PC-9 (cell line): ENCODE measurements at regions of chr3 and their contacts with region 1.

Region 1: DNA sequence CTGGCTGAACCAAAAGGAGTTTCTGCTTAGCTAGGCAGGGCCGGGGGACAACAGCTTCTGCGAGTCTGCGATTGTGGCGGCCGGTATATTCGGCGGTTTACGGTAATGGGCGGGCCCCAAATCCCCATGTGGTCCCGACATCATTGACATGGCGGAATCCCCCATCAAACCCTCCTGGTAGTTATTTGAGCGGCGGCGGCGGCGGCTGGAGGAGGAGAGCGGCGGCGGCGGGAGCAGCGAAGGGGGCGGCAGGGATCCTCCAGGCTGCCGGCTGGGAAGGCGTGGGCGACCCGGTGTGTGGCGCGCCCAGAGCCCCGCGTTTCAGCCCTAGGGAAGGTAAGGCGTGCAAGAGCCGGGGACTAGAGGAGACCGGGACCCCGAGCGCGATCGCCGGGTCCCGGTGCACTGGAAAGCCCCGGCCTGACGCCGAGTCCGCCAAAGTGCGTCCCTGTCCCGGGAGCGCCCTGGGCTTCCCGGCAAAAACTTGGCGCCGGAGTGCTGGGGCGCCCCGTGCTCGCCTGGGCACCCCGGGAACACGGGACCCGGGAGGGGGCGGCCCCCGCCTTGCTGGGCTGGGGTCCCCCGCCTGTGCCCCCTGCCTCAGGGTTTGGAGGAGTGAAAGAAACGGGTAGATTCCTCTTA is at the start of gene FNDC3B:
- DNase-seq: peak; percentile 91 to 96
- H3K4me3 ChIP-seq: peak within 1 kb of the TSS; percentile 63
- H3K27ac ChIP-seq: peak within 1 kb of the TSS; percentile 96
- H3K4me1 ChIP-seq: peaks cover 58% of the 10 kb centered on the region
- H3K27me3 ChIP-seq: no peaks in the 10 kb centered on the region
- CTCF ChIP-seq: no peak
- total RNA-seq, gene FNDC3B: 79.4 and 106 TPM in 2 replicates

Region 2: GRCh38 chr3:171646357-171647133 is 393.0 kb before region 1 on chr3:
- CTCF ChIA-PET with region 1: no interaction called
- POLR2A ChIA-PET with region 1: no interaction called
- intact Hi-C with region 1: loop called (anchors 5 kb)
- DNase-seq: peak in 1 of 2 experiments; percentile 51
- H3K4me3 ChIP-seq: no peak overlapping the region
- H3K27ac ChIP-seq: no peak overlapping the region
- H3K4me1 ChIP-seq: no peaks in the 10 kb centered on the region
- H3K27me3 ChIP-seq: no peaks in the 10 kb centered on the region
- CTCF ChIP-seq: peak; percentile 90

Region 3: GRCh38 chr3:171829841-171830517 is 209.6 kb before region 1 on chr3:
- CTCF ChIA-PET with region 1: interaction called, 21 read pairs
- POLR2A ChIA-PET with region 1: no interaction called
- intact Hi-C with region 1: no loop called
- DNase-seq: peak; percentile 54 to 77
- H3K4me3 ChIP-seq: no peak overlapping the region
- H3K27ac ChIP-seq: no peak overlapping the region
- H3K4me1 ChIP-seq: peaks cover 26% of the 10 kb centered on the region
- H3K27me3 ChIP-seq: no peaks in the 10 kb centered on the region
- CTCF ChIP-seq: peak; percentile 77

Region 4: DNA sequence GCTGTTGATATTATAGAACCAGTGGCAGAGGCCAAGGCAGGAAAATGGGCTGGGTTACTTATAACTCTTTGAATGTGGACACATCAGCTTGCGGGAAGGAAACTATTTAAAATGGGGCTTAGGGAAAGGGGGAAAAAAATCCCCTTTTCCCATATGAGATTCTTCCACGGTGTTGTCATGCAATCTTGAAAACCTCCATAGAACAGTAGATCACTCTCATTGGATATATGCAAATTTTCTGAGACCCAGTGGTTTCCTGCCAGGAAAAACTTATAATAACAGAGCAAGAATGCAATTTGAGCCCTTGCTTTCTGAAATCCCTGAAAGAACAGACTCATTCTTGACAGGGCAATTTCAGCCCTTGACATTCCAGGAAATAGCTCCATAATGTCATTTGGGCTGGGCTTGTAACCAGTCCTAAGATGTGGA is 165.3 kb before region 1 on chr3:
- CTCF ChIA-PET with region 1: interaction called, 3 read pairs
- POLR2A ChIA-PET with region 1: interaction called, 24 read pairs
- intact Hi-C with region 1: loop called (anchors 1 kb)
- DNase-seq: peak; percentile 44 to 49
- H3K4me3 ChIP-seq: no peak overlapping the region
- H3K27ac ChIP-seq: 0 out of 2 replicates have a peak overlapping the region, but pooled peaks have one; percentile 0
- H3K4me1 ChIP-seq: peaks cover 15% of the 10 kb centered on the region; the same call in 1 of the 2 replicates
- H3K27me3 ChIP-seq: no peaks in the 10 kb centered on the region
- CTCF ChIP-seq: no peak

Region 5: DNA sequence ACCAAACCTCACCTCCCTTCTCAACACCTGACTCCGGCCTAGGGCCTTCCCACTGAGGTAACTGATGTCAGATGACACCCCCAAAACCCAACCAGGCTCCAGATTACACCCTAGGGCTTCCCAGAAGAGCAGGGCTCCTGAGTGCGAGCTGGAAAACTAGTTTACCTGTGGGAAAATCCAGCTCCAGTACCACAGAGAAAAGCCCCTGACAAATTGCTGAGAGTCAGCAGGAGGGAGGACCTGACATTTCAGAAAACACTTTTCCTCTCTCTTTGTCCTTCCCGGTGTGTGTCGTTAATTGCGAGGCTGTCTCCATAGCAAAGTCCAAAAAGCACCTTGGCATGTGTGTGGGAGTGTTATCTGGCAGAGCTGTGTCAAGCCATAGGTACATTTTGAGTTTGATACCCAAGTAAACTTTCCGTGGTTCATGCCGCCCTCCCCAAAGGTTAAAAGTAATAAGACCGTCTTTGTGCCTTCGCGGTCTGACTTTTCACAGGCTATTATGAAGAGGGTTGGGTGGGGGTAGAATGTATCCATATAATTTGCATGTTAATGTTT is 79.9 kb before region 1 on chr3:
- CTCF ChIA-PET with region 1: no interaction called
- POLR2A ChIA-PET with region 1: no interaction called
- intact Hi-C with region 1: loop called (anchors 2 kb)
- DNase-seq: no peak
- H3K4me3 ChIP-seq: 0 out of 2 replicates have a peak overlapping the region, but pooled peaks have one; percentile 14
- H3K27ac ChIP-seq: peak overlapping the region; percentile 91
- H3K4me1 ChIP-seq: peaks cover 36% of the 10 kb centered on the region
- H3K27me3 ChIP-seq: no peaks in the 10 kb centered on the region
- CTCF ChIP-seq: no peak

Region 6: DNA sequence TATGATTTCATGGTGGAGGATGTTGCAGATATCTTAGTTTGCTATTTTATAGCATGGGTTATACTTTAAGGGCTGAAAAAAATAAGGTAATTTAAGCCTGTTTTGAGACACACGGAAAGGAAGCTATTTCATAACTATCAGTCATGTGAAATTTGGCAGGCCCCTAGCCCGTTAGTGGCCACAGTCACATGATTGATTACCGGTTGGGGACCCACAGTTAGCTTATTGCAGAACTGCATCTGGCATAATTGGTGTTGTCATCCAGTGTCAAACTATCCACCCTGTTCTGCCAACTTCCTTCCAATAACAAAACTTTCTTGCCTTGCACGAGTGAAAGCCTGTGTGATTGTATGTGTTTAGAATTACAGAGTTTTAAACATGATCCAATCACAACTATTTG is 35.0 kb after region 1 on chr3:
- CTCF ChIA-PET with region 1: no interaction called
- POLR2A ChIA-PET with region 1: no interaction called
- intact Hi-C with region 1: no loop called
- DNase-seq: no peak
- H3K4me3 ChIP-seq: no peak overlapping the region
- H3K27ac ChIP-seq: no peak overlapping the region
- H3K4me1 ChIP-seq: 0 out of 2 replicates have a peak, but pooled peaks cover 9% of the 10 kb centered on the region
- H3K27me3 ChIP-seq: no peaks in the 10 kb centered on the region
- CTCF ChIP-seq: no peak

Region 7: GRCh38 chr3:172115787-172116186 is 76.2 kb after region 1 on chr3:
- CTCF ChIA-PET with region 1: no interaction called
- POLR2A ChIA-PET with region 1: no interaction called
- intact Hi-C with region 1: no loop called
- DNase-seq: no peak
- H3K4me3 ChIP-seq: no peak overlapping the region
- H3K27ac ChIP-seq: peak overlapping the region; percentile 10; the same call in 1 of the 2 replicates
- H3K4me1 ChIP-seq: no peaks in the 10 kb centered on the region
- H3K27me3 ChIP-seq: no peaks in the 10 kb centered on the region
- CTCF ChIP-seq: no peak

Region 8: GRCh38 chr3:172317984-172318383 is 278.4 kb after region 1 on chr3:
- CTCF ChIA-PET with region 1: no interaction called
- POLR2A ChIA-PET with region 1: interaction called, 4 read pairs
- intact Hi-C with region 1: loop called (anchors 2 kb)
- DNase-seq: peak; percentile 58 to 93
- H3K4me3 ChIP-seq: no peak overlapping the region
- H3K27ac ChIP-seq: peak overlapping the region; percentile 86
- H3K4me1 ChIP-seq: peaks cover 72% of the 10 kb centered on the region
- H3K27me3 ChIP-seq: no peaks in the 10 kb centered on the region
- CTCF ChIP-seq: no peak

Region 9: DNA sequence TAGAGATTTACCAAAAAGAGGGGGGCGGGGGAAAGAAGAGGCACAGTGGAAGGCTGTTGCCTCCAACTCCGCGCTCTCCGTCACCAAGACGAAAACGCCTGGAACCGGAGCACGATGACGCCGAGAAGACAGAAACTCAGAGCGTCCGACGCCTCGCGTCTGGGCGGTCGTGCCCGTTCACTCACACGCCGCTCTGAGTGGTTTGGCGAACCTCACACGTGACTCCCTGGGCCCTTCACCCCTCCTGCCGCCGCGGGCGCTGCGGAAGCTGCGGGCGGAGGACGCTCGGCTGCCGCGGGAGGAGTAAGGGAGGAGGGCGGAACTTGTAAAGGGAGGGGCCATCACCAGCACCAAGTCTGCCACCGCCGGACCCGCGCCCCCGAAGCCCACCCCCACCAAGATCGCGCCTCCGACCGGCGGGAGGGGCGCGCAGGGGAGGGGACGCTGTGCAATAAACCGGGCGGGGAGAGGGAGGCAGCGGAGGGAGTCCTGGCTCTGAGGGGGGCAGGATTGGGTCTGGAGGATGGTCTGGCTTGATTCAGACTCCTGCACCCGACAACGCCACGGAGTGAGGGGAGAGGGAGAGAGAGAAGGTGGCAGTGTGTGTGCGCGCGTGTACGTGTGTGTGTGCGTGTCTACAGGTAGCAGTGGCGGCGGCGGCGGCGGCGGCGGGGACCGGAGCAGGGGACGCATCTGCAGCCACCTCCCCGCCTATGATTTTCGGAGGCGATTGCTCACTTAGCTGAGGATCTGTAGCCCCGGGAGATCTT is 1356.0 kb after region 1 on chr3:
- CTCF ChIA-PET with region 1: no interaction called
- POLR2A ChIA-PET with region 1: interaction called, 10 read pairs
- intact Hi-C with region 1: no loop called
- DNase-seq: peak; percentile 70 to 89
- H3K4me3 ChIP-seq: peak overlapping the region; percentile 56
- H3K27ac ChIP-seq: peak overlapping the region; percentile 57
- H3K4me1 ChIP-seq: peaks cover 30% of the 10 kb centered on the region
- H3K27me3 ChIP-seq: peaks cover 44% of the 10 kb centered on the region
- CTCF ChIP-seq: no peak